ENCODE measurements at regions of chr22 and their contacts with region 1.

Region 1: DNA sequence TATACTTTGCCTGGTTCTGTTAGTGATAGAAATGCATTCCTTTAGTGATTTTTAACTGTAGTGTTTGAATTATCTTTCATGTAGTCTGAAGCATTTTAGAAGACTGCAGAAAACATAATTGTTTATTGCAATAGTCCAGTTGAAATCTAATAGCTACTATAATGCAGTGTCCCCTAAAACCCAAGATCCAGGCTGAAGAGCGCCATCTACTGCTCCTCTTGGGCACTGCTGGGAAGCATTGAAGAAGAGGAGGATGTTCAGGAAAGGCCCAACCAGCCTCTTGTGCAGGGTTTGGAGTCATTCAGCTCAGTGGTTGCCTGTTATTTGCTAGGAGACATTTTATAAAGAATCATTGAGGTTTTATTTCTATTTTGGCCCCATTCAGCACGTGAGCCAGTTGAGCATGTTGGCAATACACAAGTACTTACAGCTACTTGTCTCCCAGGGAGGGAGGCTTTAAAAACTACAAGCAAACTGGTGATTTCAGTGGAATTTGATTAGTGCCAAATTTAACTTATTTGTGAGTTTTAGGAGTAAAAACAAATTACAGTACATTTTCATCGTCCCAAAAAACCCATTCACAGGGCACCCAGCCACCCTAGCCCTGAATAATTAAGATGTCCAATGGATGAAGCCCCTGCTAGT is 74.9 kb upstream of the HORMAD2 start:
- DNase-seq: peak; percentile 17
- ATAC-seq: peak; percentile 85
- H3K4me3 ChIP-seq: no peak overlapping the region
- H3K27ac ChIP-seq: no peak overlapping the region
- H3K4me1 ChIP-seq: no peaks in the 10 kb centered on the region
- H3K27me3 ChIP-seq: no peaks in the 10 kb centered on the region
- CTCF ChIP-seq: peak; percentile 91 to 97 (median 96)
- EP300 ChIP-seq: no peak
- POLR2A ChIP-seq: no peak
- RAD21 ChIP-seq: peak; percentile 98

Region 2: GRCh38 chr22:29635734-29636357 is 369.5 kb before region 1 on chr22:
- CTCF ChIA-PET with region 1: interaction called, 51 read pairs
- POLR2A ChIA-PET with region 1: no interaction called
- RAD21 ChIA-PET with region 1: interaction called, 19 read pairs
- SMC1A ChIA-PET with region 1: interaction called, 39 read pairs
- in situ Hi-C with region 1: loop called (anchors 5 kb)
- intact Hi-C with region 1: no loop called
- DNase-seq: peak; percentile 23
- ATAC-seq: peak; percentile 78
- H3K4me3 ChIP-seq: no peak overlapping the region
- H3K27ac ChIP-seq: no peak overlapping the region
- H3K4me1 ChIP-seq: peaks cover 11% of the 10 kb centered on the region
- H3K27me3 ChIP-seq: no peaks in the 10 kb centered on the region
- CTCF ChIP-seq: peak; percentile 62 to 79 (median 70)
- EP300 ChIP-seq: no peak
- POLR2A ChIP-seq: no peak
- RAD21 ChIP-seq: peak; percentile 72

Region 3: DNA sequence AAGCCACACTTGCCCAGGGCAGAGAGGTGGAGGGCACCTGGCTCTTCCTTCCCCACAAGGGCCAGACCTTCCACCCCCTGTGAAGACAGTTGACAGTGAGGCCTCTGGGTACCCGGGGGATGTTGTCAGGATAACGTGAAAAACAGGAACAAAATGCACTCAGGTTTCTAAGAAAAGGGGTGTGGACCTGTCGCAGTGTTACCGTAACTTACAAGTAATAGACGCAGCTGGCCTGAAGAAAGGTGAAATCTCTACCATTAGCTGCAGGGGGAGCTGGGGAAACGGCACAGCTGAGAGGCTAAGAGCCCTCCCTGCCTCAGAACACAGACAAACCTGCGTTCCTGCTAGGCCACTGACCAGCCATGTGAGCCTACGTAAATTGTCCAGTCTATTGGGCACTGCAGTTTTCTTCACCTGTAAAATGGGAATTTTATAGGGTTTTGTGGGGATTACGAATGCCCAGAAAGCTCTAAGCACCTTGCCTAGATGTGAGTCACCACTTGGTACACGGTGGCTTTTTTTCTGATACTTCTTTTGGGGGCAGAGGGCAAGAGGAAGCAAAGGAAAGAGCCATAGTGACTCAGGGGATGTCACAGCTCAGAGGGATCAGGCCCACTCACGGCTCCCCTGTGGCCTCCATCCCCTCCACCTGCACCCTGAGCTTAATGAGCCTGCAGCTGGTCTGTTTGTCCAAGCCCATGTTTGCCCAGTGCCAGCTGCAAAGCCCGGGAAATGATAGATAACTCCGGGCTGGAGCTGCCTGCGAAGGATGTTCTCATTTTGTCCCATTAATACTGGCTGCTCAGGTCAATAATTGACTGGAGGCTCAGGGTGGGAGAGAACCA is 304.0 kb before region 1 on chr22:
- CTCF ChIA-PET with region 1: interaction called, 10 read pairs
- POLR2A ChIA-PET with region 1: no interaction called
- RAD21 ChIA-PET with region 1: interaction called, 3 read pairs
- SMC1A ChIA-PET with region 1: interaction called, 3 read pairs
- in situ Hi-C with region 1: no loop called
- intact Hi-C with region 1: no loop called
- DNase-seq: no peak
- ATAC-seq: peak; percentile 66
- H3K4me3 ChIP-seq: no peak overlapping the region
- H3K27ac ChIP-seq: no peak overlapping the region
- H3K4me1 ChIP-seq: 0 out of 2 replicates have a peak, but pooled peaks cover 3% of the 10 kb centered on the region
- H3K27me3 ChIP-seq: no peaks in the 10 kb centered on the region
- CTCF ChIP-seq: peak; percentile 16 to 28 (median 21); a peak in 3 of 6 replicates
- EP300 ChIP-seq: no peak
- POLR2A ChIP-seq: no peak
- RAD21 ChIP-seq: 0 out of 2 replicates have a peak, but pooled peaks have one; percentile 12

Region 4: GRCh38 chr22:29837780-29838598 is 167.3 kb before region 1 on chr22 and contains the start of gene ASCC2:
- CTCF ChIA-PET with region 1: interaction called, 11 read pairs
- POLR2A ChIA-PET with region 1: no interaction called
- RAD21 ChIA-PET with region 1: interaction called, 7 read pairs
- SMC1A ChIA-PET with region 1: interaction called, 3 read pairs
- in situ Hi-C with region 1: no loop called
- intact Hi-C with region 1: loop called (anchors 5 kb)
- DNase-seq: peak; percentile 91
- ATAC-seq: peak; percentile 99
- H3K4me3 ChIP-seq: peak within 1 kb of the TSS; percentile 99
- H3K27ac ChIP-seq: peak within 1 kb of the TSS; percentile 78
- H3K4me1 ChIP-seq: peaks cover 6% of the 10 kb centered on the region
- H3K27me3 ChIP-seq: no peaks in the 10 kb centered on the region
- CTCF ChIP-seq: no peak
- EP300 ChIP-seq: no peak
- POLR2A ChIP-seq: peak; percentile 90
- RAD21 ChIP-seq: no peak
- polyA plus RNA-seq, gene ASCC2: 5.3 to 6.4 TPM

Region 5: GRCh38 chr22:29967461-29967860 is 37.9 kb before region 1 on chr22:
- CTCF ChIA-PET with region 1: no interaction called
- POLR2A ChIA-PET with region 1: no interaction called
- RAD21 ChIA-PET with region 1: no interaction called
- SMC1A ChIA-PET with region 1: no interaction called
- in situ Hi-C with region 1: no loop called
- intact Hi-C with region 1: no loop called
- DNase-seq: no peak
- ATAC-seq: no peak
- H3K4me3 ChIP-seq: no peak overlapping the region
- H3K27ac ChIP-seq: no peak overlapping the region
- H3K4me1 ChIP-seq: no peaks in the 10 kb centered on the region
- H3K27me3 ChIP-seq: no peaks in the 10 kb centered on the region
- CTCF ChIP-seq: no peak
- EP300 ChIP-seq: no peak
- POLR2A ChIP-seq: no peak
- RAD21 ChIP-seq: no peak

Region 6: GRCh38 chr22:30074994-30075393 is 69.7 kb after region 1 on chr22:
- CTCF ChIA-PET with region 1: interaction called, 10 read pairs
- POLR2A ChIA-PET with region 1: no interaction called
- RAD21 ChIA-PET with region 1: interaction called, 5 read pairs
- SMC1A ChIA-PET with region 1: interaction called, 13 read pairs
- in situ Hi-C with region 1: no loop called
- intact Hi-C with region 1: no loop called
- DNase-seq: no peak
- ATAC-seq: peak; percentile 57
- H3K4me3 ChIP-seq: no peak overlapping the region
- H3K27ac ChIP-seq: no peak overlapping the region
- H3K4me1 ChIP-seq: peaks cover 19% of the 10 kb centered on the region
- H3K27me3 ChIP-seq: no peaks in the 10 kb centered on the region
- CTCF ChIP-seq: no peak
- EP300 ChIP-seq: no peak
- POLR2A ChIP-seq: no peak
- RAD21 ChIP-seq: no peak

Measured in GM12878 (cell line).